Posterior vena cava (tissue), 2 donors: ENCODE measurements at regions of chr11 and their contacts with region 1.

Region 1: GRCh38 chr11:78310500-78310909 is 107.1 kb downstream of the GAB2 start:
- DNase-seq: peak; percentile 83

Region 2: DNA sequence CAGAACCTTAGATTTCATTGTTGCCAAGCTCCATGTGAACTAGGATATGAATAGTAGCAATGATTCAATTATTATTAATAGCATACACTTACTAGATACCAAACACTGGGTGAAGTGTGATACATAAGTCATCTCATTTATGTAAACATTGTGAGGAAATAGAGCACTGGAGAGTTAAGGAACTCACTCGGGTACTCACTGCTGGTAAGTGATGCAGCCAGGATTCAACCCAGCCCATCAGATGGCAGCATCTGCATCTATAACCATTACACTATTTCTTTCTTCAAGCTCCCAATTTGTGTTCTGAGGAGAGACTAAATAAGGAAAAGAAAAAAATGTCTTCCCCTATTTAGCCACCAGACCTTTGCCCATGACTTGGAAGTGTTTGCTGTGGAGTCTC is 160.9 kb before region 1 on chr11:
- intact Hi-C with region 1: loop called in 1 of 2 experiments (anchors 10 kb)
- DNase-seq: no peak

Region 3: GRCh38 chr11:78212586-78213371 is 97.7 kb before region 1 on chr11:
- intact Hi-C with region 1: no loop called
- DNase-seq: no peak

Region 4: DNA sequence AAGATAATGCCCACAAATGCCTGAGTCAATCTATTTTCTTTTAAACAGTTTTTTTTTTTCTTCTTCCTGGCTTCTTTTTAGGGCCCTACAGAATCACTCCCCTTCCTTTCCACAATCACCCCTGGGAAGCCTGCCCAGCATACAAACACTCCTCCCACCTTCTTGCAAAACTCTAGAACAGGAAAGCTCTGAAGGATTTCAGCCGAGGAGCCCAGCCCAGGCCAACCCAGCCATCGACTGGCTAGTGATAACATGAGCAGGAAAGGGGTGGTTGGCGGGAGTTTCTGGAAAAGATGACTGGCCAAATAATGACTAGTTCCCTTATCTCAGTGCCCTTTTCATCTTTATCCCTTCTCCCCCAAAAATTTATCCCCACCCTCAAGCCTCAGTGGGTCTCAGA is 53.5 kb before region 1 on chr11:
- intact Hi-C with region 1: loop called in 1 of 2 experiments (anchors 10 kb)
- DNase-seq: peak; percentile 96

Region 5: DNA sequence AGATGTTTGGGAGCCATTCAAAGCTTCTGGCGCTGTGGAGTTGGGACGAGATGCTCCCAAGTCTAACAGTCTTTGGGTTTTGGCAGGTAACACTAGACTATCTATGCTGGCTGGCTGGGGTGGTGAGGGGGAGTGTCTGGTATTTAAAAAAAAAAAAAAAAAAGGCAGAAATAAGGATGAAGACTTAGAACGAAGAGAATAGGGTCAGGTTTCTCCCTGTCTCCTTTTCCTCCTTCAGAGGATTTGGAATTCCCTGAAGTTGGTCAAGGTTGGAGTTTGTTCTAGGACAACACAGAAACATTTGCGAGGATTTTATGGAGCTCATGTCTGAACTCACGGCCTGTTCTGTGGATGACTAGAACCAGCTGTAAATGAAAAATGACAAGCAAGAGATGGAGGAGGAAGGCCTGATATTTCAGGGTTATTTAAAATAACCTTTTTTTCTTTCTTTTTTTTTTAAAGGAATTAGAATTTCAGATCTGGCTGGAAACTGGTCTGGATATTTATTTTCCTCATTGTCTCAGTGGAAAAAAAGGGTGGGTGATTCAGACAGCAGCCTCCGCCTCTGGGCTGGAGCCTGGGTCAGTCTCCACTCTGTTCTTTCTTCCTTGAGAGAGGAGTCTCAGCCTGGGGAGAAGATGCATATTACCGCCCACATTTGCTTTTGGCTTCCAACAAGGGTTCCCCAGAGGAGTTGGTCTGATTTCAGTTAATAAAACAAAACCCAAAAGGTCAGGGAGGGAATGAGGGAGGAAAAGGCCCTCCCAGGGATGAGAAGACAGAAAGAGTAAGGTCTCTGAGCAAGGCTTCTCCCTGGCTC is 41.7 kb before region 1 on chr11:
- intact Hi-C with region 1: no loop called
- DNase-seq: peak; percentile 89